ENCODE measurements at regions of chr2 and their contacts with region 1.

Region 1: GRCh38 chr2:2613279-2614199 is 282.5 kb upstream of the MYT1L start:
- DNase-seq: peak; percentile 75 to 95 (median 91)
- ATAC-seq: peak; percentile 98
- H3K4me3 Mint-ChIP-seq: peak overlapping the region; percentile 77 to 90 (median 85)
- H3K27ac Mint-ChIP-seq: peak overlapping the region; percentile 79 to 96 (median 92)
- H3K4me1 Mint-ChIP-seq: peaks cover 4 to 19% (median 10%) of the 10 kb centered on the region in 4 donors
- H3K27me3 Mint-ChIP-seq: peaks cover 4 to 13% (median 8%) of the 10 kb centered on the region in 5 donors

Region 2: DNA sequence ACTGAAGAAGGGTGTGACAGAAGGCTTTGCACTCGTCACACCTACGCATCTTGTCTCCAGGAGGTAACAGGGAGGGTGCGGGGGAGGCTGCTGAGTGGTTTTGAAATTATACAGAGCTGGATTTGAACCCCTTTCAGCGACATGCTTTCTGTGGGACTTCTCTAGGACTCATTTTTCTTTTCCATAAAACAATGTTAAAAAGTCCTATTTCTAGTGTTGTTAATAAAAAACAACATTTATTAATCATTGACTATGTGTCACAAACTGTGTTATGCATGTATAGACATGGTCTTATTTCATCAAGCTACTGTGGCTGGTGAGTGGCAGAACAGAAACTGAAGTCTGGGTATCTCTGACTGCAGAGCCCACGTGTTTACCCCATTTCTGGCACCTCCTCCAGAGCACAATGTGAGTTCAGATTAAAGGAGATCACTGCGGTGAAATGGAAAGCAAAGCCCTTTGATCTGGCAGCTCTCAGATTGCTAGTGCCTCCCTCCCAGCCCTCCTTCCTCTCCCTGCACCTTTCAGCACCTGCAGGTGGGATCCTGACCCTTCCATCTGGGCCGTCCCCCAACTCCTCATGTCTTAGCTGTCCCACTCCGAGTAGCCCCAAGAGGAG is 33.0 kb after region 1 on chr2:
- POLR2A ChIA-PET with region 1: interaction called, 27 read pairs
- DNase-seq: peak; percentile 29 to 83 (median 64)
- ATAC-seq: peak; percentile 94 to 97
- H3K4me3 Mint-ChIP-seq: peak overlapping the region; percentile 52 to 88 (median 81)
- H3K27ac Mint-ChIP-seq: peak overlapping the region; percentile 79 to 98 (median 94)
- H3K4me1 Mint-ChIP-seq: peaks cover 25 to 65% (median 36%) of the 10 kb centered on the region in 4 donors
- H3K27me3 Mint-ChIP-seq: peaks cover 0 to 3% (median 0%) of the 10 kb centered on the region in 5 donors